Activated CD4-positive, alpha-beta T cell treated with anti-CD3 and anti-CD28 coated beads for 36 hours (primary cell): ENCODE measurements at regions of chr19 and their contacts with region 1.

Region 1: GRCh38 chr19:38514812-38515633 is 81.5 kb downstream of the RYR1 start:
- DNase-seq: peak; percentile 88
- ATAC-seq: peak; percentile 96
- H3K4me3 Mint-ChIP-seq: no peak overlapping the region
- H3K27ac Mint-ChIP-seq: peak overlapping the region; percentile 42
- H3K4me1 Mint-ChIP-seq: peaks cover 16% of the 10 kb centered on the region
- H3K27me3 Mint-ChIP-seq: no peaks in the 10 kb centered on the region

Region 2: DNA sequence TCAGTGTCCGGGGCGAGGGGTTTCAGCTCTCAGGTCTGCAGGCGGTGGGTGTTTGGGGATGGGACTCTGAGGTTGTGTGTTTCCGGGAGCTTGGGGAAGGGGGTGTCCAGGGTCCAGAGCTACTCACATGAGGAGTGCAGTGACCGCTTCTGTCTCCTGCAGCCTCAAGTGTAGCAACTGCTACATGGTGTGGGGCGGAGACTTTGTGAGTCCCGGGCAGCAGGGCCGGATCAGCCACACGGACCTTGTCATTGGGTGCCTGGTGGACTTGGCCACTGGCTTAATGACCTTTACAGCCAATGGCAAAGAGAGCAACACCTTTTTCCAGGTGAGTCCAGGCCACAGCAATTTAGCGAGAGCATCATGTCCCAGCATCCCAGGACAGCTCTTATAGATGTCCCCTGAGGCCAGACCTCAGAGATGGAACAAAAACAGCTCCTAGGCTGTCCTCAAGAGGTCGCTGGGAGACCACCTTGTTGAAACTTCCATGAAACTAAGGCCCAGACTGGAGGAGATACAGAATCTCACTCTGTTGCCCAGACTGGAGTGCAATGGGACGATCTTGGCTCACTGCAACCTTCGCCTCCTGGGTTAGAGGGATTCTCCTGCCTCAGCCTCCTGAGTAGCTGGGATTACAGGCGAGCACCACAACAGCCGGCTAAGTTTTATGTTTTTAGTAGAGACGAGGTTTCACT is 36.6 kb before region 1 on chr19:
- CTCF ChIA-PET with region 1: no interaction called
- POLR2A ChIA-PET with region 1: no interaction called
- intact Hi-C with region 1: no loop called
- DNase-seq: no peak
- ATAC-seq: peak; percentile 44
- H3K4me3 Mint-ChIP-seq: no peak overlapping the region
- H3K27ac Mint-ChIP-seq: no peak overlapping the region
- H3K4me1 Mint-ChIP-seq: no peaks in the 10 kb centered on the region
- H3K27me3 Mint-ChIP-seq: no peaks in the 10 kb centered on the region

Region 3: GRCh38 chr19:38538793-38539528 is 23.9 kb after region 1 on chr19:
- CTCF ChIA-PET with region 1: interaction called, 4 read pairs
- POLR2A ChIA-PET with region 1: no interaction called
- intact Hi-C with region 1: loop called in 1 of 2 experiments (anchors 2 kb)
- DNase-seq: peak; percentile 49
- ATAC-seq: peak; percentile 87
- H3K4me3 Mint-ChIP-seq: peak overlapping the region; percentile 36
- H3K27ac Mint-ChIP-seq: peak overlapping the region; percentile 89
- H3K4me1 Mint-ChIP-seq: peaks cover 41% of the 10 kb centered on the region
- H3K27me3 Mint-ChIP-seq: no peaks in the 10 kb centered on the region

Region 4: GRCh38 chr19:38551450-38551813 is 36.4 kb after region 1 on chr19:
- CTCF ChIA-PET with region 1: interaction called, 16 read pairs
- POLR2A ChIA-PET with region 1: no interaction called
- intact Hi-C with region 1: no loop called
- DNase-seq: peak; percentile 82
- ATAC-seq: peak; percentile 89
- H3K4me3 Mint-ChIP-seq: no peak overlapping the region
- H3K27ac Mint-ChIP-seq: no peak overlapping the region
- H3K4me1 Mint-ChIP-seq: peaks cover 27% of the 10 kb centered on the region
- H3K27me3 Mint-ChIP-seq: peaks cover 6% of the 10 kb centered on the region

Region 5: DNA sequence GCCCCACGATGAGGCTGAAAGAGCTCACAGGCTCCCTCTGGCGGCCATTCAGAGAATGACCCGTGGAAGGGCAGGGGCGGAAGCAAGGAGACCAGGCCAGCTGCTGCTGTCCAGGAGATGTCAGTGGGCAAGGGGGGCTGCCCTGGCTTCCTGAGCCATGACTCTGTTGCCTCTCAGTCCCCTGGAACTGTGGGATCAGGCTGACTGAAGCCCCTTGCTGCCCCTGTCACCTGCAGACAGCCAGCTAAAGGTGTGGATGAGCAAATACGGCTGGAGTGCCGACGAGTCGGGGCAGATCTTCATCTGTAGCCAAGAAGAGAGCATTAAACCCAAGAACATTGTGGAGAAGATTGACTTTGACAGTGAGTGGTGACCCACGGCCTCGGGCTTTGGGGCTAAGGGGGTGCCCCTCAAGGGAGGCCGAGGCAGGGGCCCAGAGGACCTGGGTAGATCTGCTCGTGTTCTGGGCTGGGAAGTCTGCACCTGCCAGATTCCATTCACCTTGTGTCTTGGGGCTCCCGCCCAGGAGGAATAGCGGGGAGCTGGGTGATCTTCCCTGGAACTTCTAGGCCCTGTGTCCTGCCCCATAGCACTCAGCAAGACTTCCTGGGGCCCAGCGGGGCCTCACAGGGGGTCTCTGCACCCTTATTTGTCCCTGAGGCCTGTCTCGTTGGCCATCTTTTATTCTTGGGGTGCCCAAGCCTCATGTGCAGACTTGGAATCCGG is 119.9 kb after region 1 on chr19:
- CTCF ChIA-PET with region 1: interaction called, 8 read pairs
- POLR2A ChIA-PET with region 1: no interaction called
- intact Hi-C with region 1: loop called (anchors 1 kb)
- DNase-seq: peak; percentile 84
- ATAC-seq: no peak
- H3K4me3 Mint-ChIP-seq: no peak overlapping the region
- H3K27ac Mint-ChIP-seq: peak overlapping the region; percentile 90
- H3K4me1 Mint-ChIP-seq: peaks cover 28% of the 10 kb centered on the region
- H3K27me3 Mint-ChIP-seq: no peaks in the 10 kb centered on the region

Region 6: GRCh38 chr19:38711726-38712153 is 196.7 kb after region 1 on chr19:
- CTCF ChIA-PET with region 1: no interaction called
- POLR2A ChIA-PET with region 1: no interaction called
- intact Hi-C with region 1: no loop called
- DNase-seq: no peak
- ATAC-seq: no peak
- H3K4me3 Mint-ChIP-seq: no peak overlapping the region
- H3K27ac Mint-ChIP-seq: no peak overlapping the region
- H3K4me1 Mint-ChIP-seq: no peaks in the 10 kb centered on the region
- H3K27me3 Mint-ChIP-seq: no peaks in the 10 kb centered on the region

Region 7: DNA sequence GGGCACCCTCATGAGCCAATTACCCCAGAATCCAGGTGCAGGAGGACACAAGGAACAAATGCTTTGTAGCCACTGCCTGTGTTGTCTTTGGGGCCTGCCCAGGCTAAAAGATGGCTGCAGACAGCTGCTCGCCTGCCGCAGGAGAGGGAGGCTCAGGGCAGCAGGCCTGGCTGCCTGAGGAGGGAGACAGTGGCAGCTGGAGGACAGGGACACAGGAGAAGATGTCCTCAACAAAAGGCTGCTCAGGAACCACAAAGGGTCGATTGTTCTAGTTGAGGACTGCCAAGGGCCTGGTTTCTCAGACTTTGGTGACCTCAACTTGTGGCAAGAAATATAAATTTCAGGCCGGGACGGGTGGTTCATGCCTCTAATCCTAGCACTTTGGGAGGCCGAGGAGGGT is 376.7 kb after region 1 on chr19:
- CTCF ChIA-PET with region 1: interaction called, 3 read pairs
- POLR2A ChIA-PET with region 1: no interaction called
- intact Hi-C with region 1: loop called in 1 of 2 experiments (anchors 5 kb)
- DNase-seq: no peak
- ATAC-seq: no peak
- H3K4me3 Mint-ChIP-seq: no peak overlapping the region
- H3K27ac Mint-ChIP-seq: no peak overlapping the region
- H3K4me1 Mint-ChIP-seq: no peaks in the 10 kb centered on the region
- H3K27me3 Mint-ChIP-seq: no peaks in the 10 kb centered on the region